IMR-90 (cell line): ENCODE measurements at regions of chr22 and their contacts with region 1.

Region 1: DNA sequence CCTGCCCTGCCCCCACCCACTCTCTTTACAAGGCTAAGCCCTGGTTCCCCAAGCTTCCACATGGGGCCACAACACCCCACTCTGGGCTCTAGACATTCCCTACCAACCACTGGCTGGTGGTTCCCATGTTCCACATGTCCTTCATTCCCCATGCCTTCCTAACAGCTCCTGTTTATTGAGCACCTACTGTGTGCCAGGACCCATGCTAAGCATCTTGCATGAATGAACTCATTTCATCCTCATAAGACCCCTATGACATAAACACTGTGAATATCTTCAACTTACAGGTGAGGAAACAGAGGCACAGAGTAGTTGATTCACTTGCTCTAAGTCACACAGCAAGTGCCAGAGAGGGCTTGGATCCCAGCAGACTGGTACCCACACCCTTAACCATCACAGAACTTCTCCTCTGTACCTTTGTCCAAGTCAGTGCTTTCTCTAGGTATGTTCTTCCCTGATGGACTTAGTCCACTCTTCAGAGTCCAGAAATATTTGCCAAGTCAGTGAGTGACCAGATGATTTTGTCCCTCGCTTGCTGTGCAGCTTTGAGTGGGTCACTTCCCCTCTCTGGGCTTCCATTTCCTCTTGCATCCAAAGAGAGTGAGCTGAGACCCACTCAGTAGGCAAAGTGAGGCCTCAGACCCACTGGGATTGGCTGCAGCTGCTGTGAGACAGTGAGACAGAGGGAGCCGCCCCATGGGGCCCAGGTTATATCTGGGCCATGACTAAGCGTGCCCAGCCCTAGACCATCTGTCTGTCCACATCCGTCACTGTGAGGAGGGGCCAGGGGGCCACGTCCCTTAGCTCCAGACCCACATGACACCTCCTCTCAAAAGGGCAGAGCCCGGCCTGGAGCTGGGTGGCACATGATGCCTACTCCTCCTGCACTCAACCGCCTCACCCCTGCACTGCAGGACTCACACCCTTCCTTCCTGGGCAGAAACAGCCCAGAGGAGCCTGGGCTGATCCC is 132.4 kb downstream of the MN1 start:
- DNase-seq: peak; percentile 18
- ATAC-seq: peak; percentile 60
- H3K4me3 ChIP-seq: no peak overlapping the region
- H3K27ac ChIP-seq: no peak overlapping the region
- H3K4me1 ChIP-seq: peaks cover 4% of the 10 kb centered on the region; the same call in 1 of the 2 replicates
- H3K27me3 ChIP-seq: peaks cover 11% of the 10 kb centered on the region; the same call in 1 of the 2 replicates
- CTCF ChIP-seq: no peak
- POLR2A ChIP-seq: no peak
- RAD21 ChIP-seq: no peak

Region 2: DNA sequence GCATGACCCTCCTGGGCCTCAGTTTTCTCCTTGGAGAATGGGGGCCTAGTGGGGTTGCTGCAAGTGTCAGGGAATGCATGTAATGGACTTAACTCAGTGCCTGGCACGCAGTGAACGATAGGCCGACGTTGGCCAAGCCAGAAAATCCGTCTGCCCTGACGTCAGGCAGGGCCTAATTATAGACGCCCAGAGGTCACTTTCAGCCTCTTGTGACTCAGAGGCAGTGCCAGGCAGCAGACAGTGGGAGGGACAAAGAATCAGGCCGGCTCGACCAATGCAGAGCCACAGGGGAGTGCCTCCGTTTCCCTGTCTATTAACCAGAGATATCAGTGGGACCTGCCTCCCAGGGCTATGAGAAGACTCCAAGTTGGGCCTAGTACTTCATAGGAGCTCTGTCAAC is 17.4 kb after region 1 on chr22:
- CTCF ChIA-PET with region 1: no interaction called
- POLR2A ChIA-PET with region 1: no interaction called
- dilution Hi-C with region 1: no loop called
- in situ Hi-C with region 1: no loop called
- intact Hi-C with region 1: loop called (anchors 1 kb)
- DNase-seq: peak; percentile 85
- ATAC-seq: peak; percentile 96
- H3K4me3 ChIP-seq: no peak overlapping the region
- H3K27ac ChIP-seq: no peak overlapping the region
- H3K4me1 ChIP-seq: peaks cover 2% of the 10 kb centered on the region; the same call in 1 of the 2 replicates
- H3K27me3 ChIP-seq: peaks cover 8% of the 10 kb centered on the region
- CTCF ChIP-seq: no peak
- POLR2A ChIP-seq: no peak
- RAD21 ChIP-seq: no peak

Region 3: GRCh38 chr22:27820896-27821866 is 152.1 kb after region 1 on chr22:
- CTCF ChIA-PET with region 1: no interaction called
- POLR2A ChIA-PET with region 1: no interaction called
- dilution Hi-C with region 1: no loop called
- in situ Hi-C with region 1: no loop called
- intact Hi-C with region 1: no loop called
- DNase-seq: no peak
- ATAC-seq: no peak
- H3K4me3 ChIP-seq: no peak overlapping the region
- H3K27ac ChIP-seq: no peak overlapping the region
- H3K4me1 ChIP-seq: no peaks in the 10 kb centered on the region
- H3K27me3 ChIP-seq: peaks cover 6% of the 10 kb centered on the region
- CTCF ChIP-seq: no peak
- POLR2A ChIP-seq: no peak
- RAD21 ChIP-seq: no peak